ENCODE measurements at regions of chr9 and their contacts with region 1.

Region 1: DNA sequence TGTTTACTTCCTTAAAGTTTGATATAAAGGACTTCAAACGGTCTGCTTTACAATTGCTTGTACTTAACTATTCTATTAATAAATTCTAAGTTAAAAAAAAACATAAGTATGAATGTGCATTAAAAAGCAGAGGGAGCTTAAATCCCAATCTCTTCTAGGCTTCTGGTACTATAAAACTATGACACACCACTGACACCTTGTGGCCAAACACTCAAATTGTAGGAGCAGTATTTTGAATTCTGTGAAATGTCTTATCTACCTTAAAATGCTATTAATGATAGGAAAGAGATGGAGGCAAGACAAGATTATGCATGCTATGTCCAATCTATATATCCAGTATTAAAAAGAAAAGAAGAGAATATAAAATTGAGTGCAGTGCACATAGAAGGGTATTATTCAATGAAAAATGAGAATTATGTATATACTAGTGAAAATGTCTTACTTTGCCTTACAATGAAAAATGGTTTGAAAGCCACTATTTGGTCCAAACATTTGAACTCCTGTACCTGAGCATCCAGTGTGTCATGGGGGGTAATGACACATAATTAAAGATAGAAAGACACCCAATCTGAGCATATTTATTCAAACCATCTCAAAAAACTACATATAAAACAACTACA is 87.6 kb downstream of the ERP44 start:
- DNase-seq: peak; percentile 60
- H3K4me3 ChIP-seq: no peak overlapping the region
- H3K27ac ChIP-seq: no peak overlapping the region
- H3K4me1 ChIP-seq: no peaks in the 10 kb centered on the region
- H3K27me3 ChIP-seq: no peaks in the 10 kb centered on the region

Region 2: GRCh38 chr9:99266255-99267023 is 744.7 kb before region 1 on chr9:
- in situ Hi-C with region 1: loop called (anchors 25 kb)
- DNase-seq: peak; percentile 78
- H3K4me3 ChIP-seq: no peak overlapping the region
- H3K27ac ChIP-seq: no peak overlapping the region
- H3K4me1 ChIP-seq: peaks cover 8% of the 10 kb centered on the region
- H3K27me3 ChIP-seq: no peaks in the 10 kb centered on the region